Activated CD4-positive, alpha-beta memory T cell treated with anti-CD3 and anti-CD28 coated beads, Interleukin-2, amount 10 ng/mL, durations not matched to agents 7 days and 5 days (primary cell): ENCODE measurements at regions of chr6 and their contacts with region 1.

Region 1: DNA sequence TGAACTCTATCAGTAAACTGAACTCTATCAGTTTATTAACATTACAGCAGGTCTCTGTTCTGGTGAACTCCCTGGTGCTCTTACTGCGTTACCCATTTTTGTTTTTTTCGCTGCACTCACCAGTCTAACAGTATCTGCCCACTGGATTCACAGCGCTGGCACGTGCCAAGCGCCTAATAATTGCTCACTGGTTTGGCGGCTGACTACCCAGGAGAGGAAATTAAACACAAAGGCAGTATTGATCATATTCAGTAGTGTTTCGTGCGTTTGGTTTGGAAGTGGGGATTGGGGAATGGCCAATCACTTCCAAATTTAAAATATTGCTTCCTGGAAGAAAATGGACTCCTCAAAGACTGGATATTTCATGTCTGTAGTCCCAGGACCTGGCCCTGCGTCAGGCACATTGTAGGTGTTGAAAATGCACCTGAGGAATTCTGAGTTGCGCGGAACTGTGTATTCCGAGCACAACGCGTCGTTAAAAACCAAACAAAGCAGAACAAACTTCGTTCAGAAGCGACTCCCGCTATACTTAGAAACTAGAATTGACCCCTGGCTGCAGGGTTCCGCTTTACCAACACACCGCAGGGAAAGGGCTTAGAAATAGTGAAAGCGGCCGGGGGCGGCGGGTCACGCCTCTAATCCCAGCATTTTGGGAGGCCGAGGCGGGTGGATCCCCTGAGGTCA is 1.1 kb upstream of the RPS12 start:
- DNase-seq: peak; percentile 44
- H3K4me3 Mint-ChIP-seq: peak overlapping the region; percentile 96
- H3K27ac Mint-ChIP-seq: peak overlapping the region; percentile 99
- H3K4me1 Mint-ChIP-seq: peaks cover 42% of the 10 kb centered on the region
- H3K27me3 Mint-ChIP-seq: peaks cover 13% of the 10 kb centered on the region

Region 2: GRCh38 chr6:132512638-132513632 is 300.4 kb before region 1 on chr6 and contains the start of gene STX7:
- CTCF ChIA-PET with region 1: no interaction called
- POLR2A ChIA-PET with region 1: interaction called, 38 read pairs
- DNase-seq: peak; percentile 87
- H3K4me3 Mint-ChIP-seq: peak within 1 kb of the TSS; percentile 95
- H3K27ac Mint-ChIP-seq: peak within 1 kb of the TSS; percentile 82
- H3K4me1 Mint-ChIP-seq: peaks cover 27% of the 10 kb centered on the region
- H3K27me3 Mint-ChIP-seq: peaks cover 18% of the 10 kb centered on the region
- total RNA-seq, gene STX7: 19.9 to 20.2 TPM

Region 3: GRCh38 chr6:132768051-132768517 is 45.2 kb before region 1 on chr6:
- CTCF ChIA-PET with region 1: interaction called, 4 read pairs
- POLR2A ChIA-PET with region 1: interaction called, 29 read pairs
- DNase-seq: peak; percentile 21
- H3K4me3 Mint-ChIP-seq: no peak overlapping the region
- H3K27ac Mint-ChIP-seq: no peak overlapping the region
- H3K4me1 Mint-ChIP-seq: peaks cover 14% of the 10 kb centered on the region
- H3K27me3 Mint-ChIP-seq: no peaks in the 10 kb centered on the region

Region 4: GRCh38 chr6:132841967-132842366 is 28.7 kb after region 1 on chr6:
- CTCF ChIA-PET with region 1: no interaction called
- POLR2A ChIA-PET with region 1: no interaction called
- DNase-seq: no peak
- H3K4me3 Mint-ChIP-seq: no peak overlapping the region
- H3K27ac Mint-ChIP-seq: no peak overlapping the region
- H3K4me1 Mint-ChIP-seq: no peaks in the 10 kb centered on the region
- H3K27me3 Mint-ChIP-seq: peaks cover 6% of the 10 kb centered on the region

Region 5: GRCh38 chr6:132887204-132887603 is 73.9 kb after region 1 on chr6:
- CTCF ChIA-PET with region 1: no interaction called
- POLR2A ChIA-PET with region 1: no interaction called
- DNase-seq: no peak
- H3K4me3 Mint-ChIP-seq: no peak overlapping the region
- H3K27ac Mint-ChIP-seq: no peak overlapping the region
- H3K4me1 Mint-ChIP-seq: peaks cover 2% of the 10 kb centered on the region
- H3K27me3 Mint-ChIP-seq: peaks cover 4% of the 10 kb centered on the region